ENCODE measurements at regions of chr5 and their contacts with region 1.

Region 1: GRCh38 chr5:159106569-159107282 is 7.0 kb upstream of the EBF1 start:
- DNase-seq: no peak
- H3K4me3 ChIP-seq: peak overlapping the region; percentile 42 to 53 (median 44)
- H3K27ac ChIP-seq: peak overlapping the region in 2 of 4 donors; percentile 29 to 33
- H3K4me1 ChIP-seq: peaks cover 7 to 35% (median 29%) of the 10 kb centered on the region in 4 donors
- H3K27me3 ChIP-seq: peaks cover 0 to 72% (median 30%) of the 10 kb centered on the region in 4 donors
- CTCF ChIP-seq: peak; percentile 79 to 88 (median 81)
- EP300 ChIP-seq: no peak
- POLR2A ChIP-seq: no peak

Region 2: DNA sequence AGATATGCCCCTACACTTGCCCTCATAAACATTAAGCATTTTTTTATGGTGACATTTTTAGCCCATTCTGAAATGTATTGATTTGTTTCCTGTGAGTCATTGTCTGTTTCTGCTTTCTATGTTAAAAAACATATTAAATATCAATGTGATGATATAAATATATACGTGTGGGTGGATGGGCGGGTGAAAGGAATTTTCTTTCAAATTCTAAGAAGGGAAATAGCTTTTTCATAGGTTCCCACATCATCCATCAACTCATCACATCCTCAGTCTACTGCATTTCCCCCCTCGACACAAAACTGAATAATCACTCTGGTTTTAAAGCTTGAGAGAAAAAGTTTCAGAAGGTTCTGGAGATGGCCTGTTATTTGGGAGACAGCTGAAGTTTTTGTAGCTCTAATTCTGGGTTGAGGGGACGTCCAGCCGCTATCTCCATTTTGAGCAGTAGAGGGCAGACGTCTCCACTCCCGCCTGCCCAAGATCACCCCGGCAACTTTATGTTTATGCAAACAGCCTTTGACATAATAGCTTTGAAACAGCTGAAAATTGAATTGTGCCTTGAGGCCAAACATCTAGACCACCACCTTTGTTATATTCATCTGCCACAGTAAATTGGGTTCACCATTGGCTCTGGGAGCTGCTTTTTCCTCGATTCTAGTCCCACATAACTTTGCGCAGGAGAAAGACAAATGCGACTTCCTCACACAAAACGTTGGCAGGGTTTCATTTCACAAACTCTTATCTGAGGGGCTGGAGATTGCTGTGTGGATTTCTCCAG is 1031.5 kb before region 1 on chr5:
- intact Hi-C with region 1: loop called (anchors 5 kb)
- DNase-seq: peak; percentile 94
- H3K4me3 ChIP-seq: peak overlapping the region; percentile 32 to 49 (median 38)
- H3K27ac ChIP-seq: peak overlapping the region in 1 of 4 donors; percentile 51
- H3K4me1 ChIP-seq: peaks cover 0 to 11% (median 6%) of the 10 kb centered on the region in 4 donors
- H3K27me3 ChIP-seq: no peaks in the 10 kb centered on the region
- CTCF ChIP-seq: peak; percentile 69 to 89 (median 84)
- EP300 ChIP-seq: no peak
- POLR2A ChIP-seq: no peak

Region 3: GRCh38 chr5:158174918-158175851 is 931.5 kb before region 1 on chr5:
- intact Hi-C with region 1: loop called (anchors 2 kb)
- DNase-seq: no peak
- H3K4me3 ChIP-seq: no peak overlapping the region
- H3K27ac ChIP-seq: peak overlapping the region; percentile 28 to 55 (median 40)
- H3K4me1 ChIP-seq: peaks cover 12 to 15% (median 14%) of the 10 kb centered on the region in 4 donors
- H3K27me3 ChIP-seq: peaks cover 0 to 5% (median 0%) of the 10 kb centered on the region in 4 donors
- CTCF ChIP-seq: peak; percentile 65 to 77 (median 72)
- EP300 ChIP-seq: no peak
- POLR2A ChIP-seq: no peak

Region 4: DNA sequence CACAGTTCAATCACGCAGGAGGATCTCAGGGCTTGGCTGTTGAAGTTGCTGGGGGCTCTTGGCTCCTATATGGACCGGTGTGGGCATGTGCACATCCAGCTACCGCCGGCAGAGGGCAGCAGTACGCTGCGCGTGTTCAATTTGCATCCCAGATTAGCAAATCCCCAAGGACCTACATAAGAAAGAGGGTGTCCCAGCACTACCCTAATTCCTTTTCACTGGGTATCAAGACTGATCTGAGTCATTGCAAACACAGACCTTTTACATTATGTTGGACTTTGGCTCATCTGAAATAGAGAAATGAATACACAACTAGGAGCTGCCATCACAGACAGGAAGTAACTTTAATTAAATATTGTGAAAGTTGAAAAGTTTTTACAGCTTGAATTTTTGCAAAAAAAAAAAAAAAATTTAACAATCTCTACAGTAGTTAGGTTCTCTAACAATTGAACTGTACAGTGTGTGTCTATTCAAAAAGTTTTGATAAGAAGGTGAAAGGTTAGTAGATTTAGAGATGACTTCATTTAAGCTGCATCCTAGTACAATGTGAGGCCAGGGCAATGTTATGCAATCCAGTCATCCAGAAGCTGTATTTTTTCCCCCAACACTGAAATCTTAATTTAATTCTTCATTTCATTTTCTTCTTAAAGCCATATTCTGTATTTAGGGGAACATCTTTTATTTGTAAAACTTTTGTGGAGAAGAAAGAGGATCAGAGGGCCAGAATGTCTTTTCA is 411.0 kb before region 1 on chr5:
- intact Hi-C with region 1: loop called (anchors 1 kb)
- DNase-seq: peak; percentile 94
- H3K4me3 ChIP-seq: no peak overlapping the region
- H3K27ac ChIP-seq: peak overlapping the region in 2 of 4 donors; percentile 15 to 21
- H3K4me1 ChIP-seq: peaks cover 0 to 30% (median 7%) of the 10 kb centered on the region in 4 donors
- H3K27me3 ChIP-seq: peaks cover 0 to 10% (median 0%) of the 10 kb centered on the region in 4 donors
- CTCF ChIP-seq: peak; percentile 91 to 99 (median 98)
- EP300 ChIP-seq: no peak
- POLR2A ChIP-seq: no peak

Region 5: DNA sequence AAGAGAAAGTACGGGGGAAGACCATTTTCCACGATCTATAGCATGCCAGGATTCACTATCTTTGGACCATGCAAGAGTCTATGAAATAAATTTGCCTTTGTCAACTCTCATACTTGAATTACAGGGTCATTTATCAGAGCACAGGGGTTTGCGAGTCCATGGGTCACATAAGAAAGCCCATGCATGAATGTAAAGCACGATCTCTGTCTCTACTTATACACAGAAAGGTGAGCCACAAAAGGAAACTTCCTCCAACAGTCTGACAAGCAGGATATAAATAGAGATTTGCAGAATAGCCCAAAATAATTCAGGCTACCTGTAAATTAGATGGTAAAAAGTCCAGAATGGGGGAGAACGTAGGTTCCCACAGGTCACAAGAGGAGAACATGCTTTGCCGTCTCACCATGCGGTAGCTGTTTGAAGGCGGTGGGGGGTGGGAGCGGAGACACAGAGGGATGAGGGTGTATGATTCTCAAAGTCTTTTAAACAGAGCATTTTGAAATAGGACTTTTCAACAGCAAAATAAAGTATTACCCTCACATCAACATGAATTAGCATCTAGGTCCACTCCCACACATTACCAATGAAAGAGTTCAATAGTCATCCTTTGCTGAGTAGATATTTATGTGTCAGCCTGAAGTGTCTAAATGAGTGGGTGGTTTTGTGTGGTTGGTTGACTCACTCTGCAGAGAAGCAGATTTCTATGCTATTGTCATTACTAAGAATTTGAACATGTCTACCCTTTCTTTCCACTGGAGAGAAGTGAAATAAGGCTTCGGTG is 286.7 kb before region 1 on chr5:
- intact Hi-C with region 1: no loop called
- DNase-seq: no peak
- H3K4me3 ChIP-seq: no peak overlapping the region
- H3K27ac ChIP-seq: no peak overlapping the region
- H3K4me1 ChIP-seq: no peaks in the 10 kb centered on the region
- H3K27me3 ChIP-seq: no peaks in the 10 kb centered on the region
- CTCF ChIP-seq: no peak
- EP300 ChIP-seq: no peak
- POLR2A ChIP-seq: no peak